Activated CD8-positive, alpha-beta memory T cell treated with anti-CD3 and anti-CD28 coated beads, Interleukin-2, amount 10 ng/mL, durations not matched to agents 7 days and 5 days (primary cell): ENCODE measurements at regions of chr17 and their contacts with region 1.

Region 1: DNA sequence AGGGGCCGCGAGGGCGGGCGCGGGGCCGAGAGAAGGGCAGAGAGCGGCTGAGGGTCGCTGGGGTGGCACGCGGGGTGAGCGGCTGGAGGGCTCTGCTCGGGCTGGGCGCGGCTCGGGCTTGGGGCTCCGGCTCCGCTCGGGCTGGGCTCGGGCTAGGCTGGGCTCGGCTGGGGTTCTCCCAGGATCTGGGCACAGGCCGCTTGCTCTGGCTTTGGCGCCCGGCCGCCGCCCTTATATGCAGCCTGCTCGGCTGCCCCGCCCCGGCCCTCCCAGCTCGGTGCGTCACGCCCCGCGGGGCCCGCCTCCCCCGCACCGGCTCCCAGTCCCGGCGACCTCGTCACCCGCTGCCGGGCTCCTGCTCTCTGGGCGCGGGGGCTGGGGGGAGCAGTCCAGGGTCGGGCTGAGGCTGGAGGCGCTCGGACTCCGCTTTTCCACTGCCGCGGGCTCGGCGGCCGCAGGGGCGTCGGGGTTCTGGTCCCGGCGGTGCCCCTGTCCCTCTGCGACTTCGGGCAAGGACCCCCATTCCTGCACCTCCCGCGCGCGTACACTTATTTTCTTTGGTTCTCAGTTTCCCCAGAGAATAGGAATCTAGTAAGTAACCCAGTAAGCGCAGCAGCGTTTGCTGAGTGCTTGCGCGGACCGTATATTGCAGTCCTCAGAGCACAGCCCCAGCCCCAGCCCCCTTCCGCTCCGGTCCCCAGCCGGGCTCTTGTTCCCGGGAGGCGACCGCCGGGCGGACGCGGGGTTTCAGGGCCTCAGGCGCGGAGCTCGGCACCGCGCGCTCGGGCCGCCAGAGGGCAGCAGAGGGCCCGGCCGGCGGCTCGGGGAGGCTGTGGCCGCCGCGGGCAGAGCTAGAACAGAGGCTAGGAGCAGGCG is at the start of gene RASD1:
- DNase-seq: peak; percentile 85
- ATAC-seq: peak; percentile 86
- H3K4me3 Mint-ChIP-seq: peak within 1 kb of the TSS; percentile 52
- H3K27ac Mint-ChIP-seq: no peak within 1 kb of the TSS
- H3K4me1 Mint-ChIP-seq: peaks cover 4% of the 10 kb centered on the region
- H3K27me3 Mint-ChIP-seq: peaks cover 15% of the 10 kb centered on the region
- total RNA-seq, gene RASD1: 2.2 to 2.5 TPM

Region 2: DNA sequence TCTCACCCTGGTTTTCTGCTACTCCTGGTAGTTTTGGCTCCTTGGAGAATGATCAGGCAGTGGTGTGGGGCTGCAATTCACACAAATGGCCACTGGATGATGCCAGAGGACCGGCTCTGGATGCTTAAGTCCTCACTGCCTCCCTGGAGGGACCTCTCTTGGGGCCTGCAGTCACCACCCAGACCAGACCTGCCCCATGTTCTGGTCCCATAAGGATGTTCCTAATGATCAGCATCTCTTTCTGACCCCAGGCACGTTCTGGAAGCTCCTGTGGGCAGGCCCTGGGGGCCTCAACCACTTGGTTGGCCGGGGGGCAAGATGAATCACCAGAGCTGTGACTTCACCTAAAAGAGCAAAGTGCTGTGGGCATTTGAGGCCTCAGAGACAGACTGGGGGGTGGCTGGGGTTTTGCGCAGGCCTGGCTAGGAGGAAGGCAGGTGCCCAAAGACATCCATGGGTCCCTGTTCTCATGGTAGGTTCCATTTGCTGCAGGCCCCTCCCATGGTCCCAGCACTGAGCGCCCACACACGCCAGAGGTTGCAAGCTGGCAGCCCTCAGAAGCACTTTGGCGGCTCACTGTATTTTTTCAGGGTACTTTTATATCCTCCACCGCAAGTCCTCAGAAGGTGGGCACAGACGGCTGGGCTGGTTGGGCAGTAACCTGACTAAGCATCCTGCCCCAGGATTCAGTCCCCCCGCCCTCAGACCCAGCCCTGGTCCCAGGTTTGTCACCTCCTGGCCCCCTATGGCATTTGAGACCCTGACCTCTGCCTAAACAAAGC is 140.1 kb before region 1 on chr17:
- CTCF ChIA-PET with region 1: interaction called, 49 read pairs
- DNase-seq: peak; percentile 79
- ATAC-seq: peak; percentile 86
- H3K4me3 Mint-ChIP-seq: no peak overlapping the region
- H3K27ac Mint-ChIP-seq: peak overlapping the region; percentile 4
- H3K4me1 Mint-ChIP-seq: no peaks in the 10 kb centered on the region
- H3K27me3 Mint-ChIP-seq: peaks cover 28% of the 10 kb centered on the region

Region 3: DNA sequence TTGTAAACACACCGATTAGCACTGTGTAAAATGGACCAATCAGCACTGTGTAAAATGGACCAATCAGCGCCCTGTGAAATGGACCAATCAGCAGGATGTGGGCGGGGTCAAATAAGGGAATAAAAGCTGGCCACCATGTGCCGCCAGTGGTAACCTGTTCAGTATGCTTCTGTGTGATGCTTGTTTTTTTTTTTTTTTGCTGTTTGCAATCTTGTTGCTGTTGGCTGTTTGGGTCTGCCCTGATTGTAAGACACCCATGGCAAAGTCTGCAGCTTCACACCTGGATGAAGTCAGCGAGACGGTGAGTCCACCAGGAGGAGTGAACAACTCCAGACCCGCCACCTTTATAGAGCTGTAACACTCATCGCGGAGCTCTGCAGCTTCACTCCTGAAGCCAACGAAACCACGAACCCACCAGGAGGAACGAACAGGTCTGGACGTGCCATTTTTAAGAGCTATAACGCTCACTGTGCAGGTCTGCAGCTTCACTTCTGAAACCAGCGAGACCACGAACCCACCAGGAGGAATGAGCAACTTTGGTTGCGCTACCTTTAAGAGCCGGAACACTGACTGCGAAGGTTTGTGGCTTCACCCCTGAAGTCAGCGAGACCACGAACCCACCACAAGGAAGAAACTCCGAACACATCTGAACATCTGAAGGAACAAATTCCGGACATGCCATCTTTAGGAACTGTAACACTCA is 104.6 kb before region 1 on chr17:
- CTCF ChIA-PET with region 1: interaction called, 17 read pairs
- DNase-seq: peak; percentile 85
- ATAC-seq: peak; percentile 80
- H3K4me3 Mint-ChIP-seq: peak overlapping the region; percentile 56
- H3K27ac Mint-ChIP-seq: peak overlapping the region; percentile 60
- H3K4me1 Mint-ChIP-seq: peaks cover 44% of the 10 kb centered on the region
- H3K27me3 Mint-ChIP-seq: peaks cover 30% of the 10 kb centered on the region

Region 4: GRCh38 chr17:17446666-17447155 is 49.7 kb before region 1 on chr17:
- CTCF ChIA-PET with region 1: interaction called, 15 read pairs
- DNase-seq: no peak
- ATAC-seq: no peak
- H3K4me3 Mint-ChIP-seq: no peak overlapping the region
- H3K27ac Mint-ChIP-seq: no peak overlapping the region
- H3K4me1 Mint-ChIP-seq: no peaks in the 10 kb centered on the region
- H3K27me3 Mint-ChIP-seq: peaks cover 10% of the 10 kb centered on the region

Region 5: DNA sequence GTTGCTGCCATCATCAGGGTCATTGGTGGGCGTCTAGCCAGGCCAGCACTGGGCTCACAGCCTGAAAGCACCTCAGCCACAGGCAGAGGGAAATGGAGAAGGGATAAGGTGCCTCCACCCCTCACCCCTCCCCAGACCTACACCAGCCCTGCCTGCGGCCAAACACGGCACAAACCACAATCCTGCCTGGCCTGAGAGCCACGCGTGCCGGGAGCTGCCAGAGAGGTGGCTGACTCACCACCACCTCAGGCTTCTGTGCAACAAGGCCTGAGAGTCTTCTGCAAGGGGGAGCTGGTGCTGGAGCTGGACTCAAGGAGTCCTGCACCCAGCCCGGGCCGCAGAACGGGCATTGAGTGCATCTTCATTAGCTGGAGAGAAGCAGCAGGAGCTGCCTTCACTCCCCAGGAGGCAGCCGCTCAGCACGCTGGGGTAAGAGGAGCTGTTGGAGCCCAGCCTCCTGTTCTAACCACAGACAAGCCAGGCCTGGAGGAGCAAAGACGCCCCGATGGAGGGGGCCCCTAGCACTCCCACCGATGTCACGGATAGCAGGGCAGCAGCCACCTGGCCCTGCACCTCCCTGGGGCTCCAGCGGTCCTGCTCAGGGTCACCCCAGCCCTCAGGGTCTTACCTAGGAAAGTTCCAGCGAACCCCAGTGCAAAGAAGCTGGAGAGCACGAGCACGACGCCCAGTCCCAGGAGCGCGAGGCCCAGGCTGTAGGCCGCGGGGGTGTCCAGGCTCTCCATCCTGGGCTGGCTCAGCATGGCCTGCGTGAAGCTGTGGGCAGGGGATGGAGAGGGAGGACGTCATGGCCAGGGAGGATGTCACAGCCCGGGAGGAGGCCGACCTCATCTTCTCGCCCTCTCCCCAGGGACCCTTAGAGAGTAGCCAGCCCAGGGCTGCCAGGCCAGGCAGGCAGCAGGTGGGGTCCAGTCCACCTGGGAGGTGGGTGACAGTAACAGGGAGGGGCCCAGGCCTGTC is 15.7 kb after region 1 on chr17:
- CTCF ChIA-PET with region 1: interaction called, 22 read pairs
- DNase-seq: no peak
- ATAC-seq: no peak
- H3K4me3 Mint-ChIP-seq: no peak overlapping the region
- H3K27ac Mint-ChIP-seq: no peak overlapping the region
- H3K4me1 Mint-ChIP-seq: peaks cover 14% of the 10 kb centered on the region
- H3K27me3 Mint-ChIP-seq: no peaks in the 10 kb centered on the region

Region 6: GRCh38 chr17:17591355-17592298 is 95.2 kb after region 1 on chr17 and contains the start of gene PEMT:
- CTCF ChIA-PET with region 1: interaction called, 14 read pairs
- DNase-seq: peak; percentile 98
- ATAC-seq: peak; percentile 96
- H3K4me3 Mint-ChIP-seq: peak within 1 kb of the TSS; percentile 84
- H3K27ac Mint-ChIP-seq: peak within 1 kb of the TSS; percentile 90
- H3K4me1 Mint-ChIP-seq: peaks cover 22% of the 10 kb centered on the region
- H3K27me3 Mint-ChIP-seq: no peaks in the 10 kb centered on the region
- total RNA-seq, gene PEMT: 17.5 to 18.6 TPM

Region 7: GRCh38 chr17:17641621-17642409 is 145.4 kb after region 1 on chr17:
- CTCF ChIA-PET with region 1: interaction called, 78 read pairs
- DNase-seq: peak; percentile 82
- ATAC-seq: peak; percentile 96
- H3K4me3 Mint-ChIP-seq: no peak overlapping the region
- H3K27ac Mint-ChIP-seq: no peak overlapping the region
- H3K4me1 Mint-ChIP-seq: peaks cover 2% of the 10 kb centered on the region
- H3K27me3 Mint-ChIP-seq: peaks cover 6% of the 10 kb centered on the region